Heart left ventricle (tissue), 16 donors: ENCODE measurements at regions of chr16 and their contacts with region 1.

Region 1: GRCh38 chr16:58577141-58577540 is 52.5 kb downstream of the CNOT1 start:
- DNase-seq: no peak
- ATAC-seq: no peak
- H3K4me3 ChIP-seq: no peak overlapping the region
- H3K27ac ChIP-seq: no peak overlapping the region
- H3K4me1 ChIP-seq: peaks cover 0 to 13% (median 0%) of the 10 kb centered on the region in 12 donors
- H3K27me3 ChIP-seq: no peaks in the 10 kb centered on the region
- CTCF ChIP-seq: no peak
- POLR2A ChIP-seq: no peak

Region 2: DNA sequence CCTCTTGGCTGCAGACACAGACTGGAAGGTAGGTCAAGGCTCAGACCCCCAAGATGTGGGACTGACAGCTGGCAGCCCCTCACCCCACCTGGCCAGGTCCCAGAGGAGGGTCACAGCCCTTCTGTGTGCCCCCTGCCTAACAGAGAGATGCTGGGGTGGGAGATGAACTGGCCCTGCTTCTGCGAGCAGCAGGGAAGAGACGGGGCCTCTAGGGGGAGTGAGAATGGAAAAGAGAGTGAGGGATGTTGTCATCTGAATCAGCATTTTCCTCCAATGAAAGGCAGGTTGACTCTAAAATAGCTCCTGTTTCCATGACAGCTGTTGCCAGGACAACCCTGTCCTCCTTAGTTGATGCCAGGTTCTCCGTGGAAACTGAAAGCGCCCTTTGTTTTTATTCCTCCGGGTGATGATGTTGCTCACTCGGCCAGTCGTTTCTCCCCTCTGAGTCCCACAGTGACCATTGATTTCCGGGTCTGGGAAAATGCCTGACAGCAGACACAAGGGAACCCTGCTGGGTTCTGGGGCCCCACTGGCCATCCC is 82.1 kb before region 1 on chr16:
- intact Hi-C with region 1: no loop called
- DNase-seq: peak in 4 of 5 donors; percentile 88 to 91 (median 90)
- ATAC-seq: peak; percentile 40 to 72 (median 60)
- H3K4me3 ChIP-seq: peak overlapping the region in 9 of 12 donors; percentile 2 to 46 (median 25)
- H3K27ac ChIP-seq: peak overlapping the region in 11 of 12 donors; percentile 59 to 93 (median 76)
- H3K4me1 ChIP-seq: peaks cover 0 to 86% (median 23%) of the 10 kb centered on the region in 12 donors
- H3K27me3 ChIP-seq: no peaks in the 10 kb centered on the region
- CTCF ChIP-seq: peak; percentile 13 to 70 (median 42)
- POLR2A ChIP-seq: no peak

Region 3: DNA sequence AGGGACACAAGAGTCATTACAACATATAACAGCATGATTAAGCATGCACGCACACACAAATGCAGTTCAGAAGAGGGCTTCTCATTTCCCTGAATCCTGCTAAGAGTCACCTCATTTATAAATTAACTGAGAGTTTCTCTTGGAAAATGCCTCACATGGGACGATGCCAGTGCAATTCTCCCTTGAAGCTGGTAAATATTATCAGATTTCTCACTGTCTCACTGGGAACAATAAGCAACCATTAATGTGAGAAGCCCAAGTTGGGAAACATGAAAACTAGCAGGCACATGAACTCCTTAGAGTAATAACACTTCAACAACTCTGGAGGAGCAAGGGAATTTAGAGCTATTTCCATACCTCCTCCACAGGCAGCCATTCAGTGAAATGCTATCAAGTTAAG is 35.4 kb before region 1 on chr16:
- intact Hi-C with region 1: loop called in 4 of 10 experiments (anchors 5 to 10 kb)
- DNase-seq: no peak
- ATAC-seq: no peak
- H3K4me3 ChIP-seq: no peak overlapping the region
- H3K27ac ChIP-seq: no peak overlapping the region
- H3K4me1 ChIP-seq: peaks cover 0 to 14% (median 0%) of the 10 kb centered on the region in 12 donors
- H3K27me3 ChIP-seq: no peaks in the 10 kb centered on the region
- CTCF ChIP-seq: no peak
- POLR2A ChIP-seq: no peak

Region 4: GRCh38 chr16:59463776-59464175 is 886.6 kb after region 1 on chr16:
- intact Hi-C with region 1: no loop called
- DNase-seq: no peak
- ATAC-seq: no peak
- H3K4me3 ChIP-seq: no peak overlapping the region
- H3K27ac ChIP-seq: no peak overlapping the region
- H3K4me1 ChIP-seq: no peaks in the 10 kb centered on the region
- H3K27me3 ChIP-seq: no peaks in the 10 kb centered on the region
- CTCF ChIP-seq: no peak
- POLR2A ChIP-seq: no peak